Panc1 (cell line): ENCODE measurements at regions of chr12 and their contacts with region 1.

Region 1: GRCh38 chr12:6904280-6905278 is at the start of gene LRRC23:
- DNase-seq: peak; percentile 76
- ATAC-seq: peak; percentile 98
- H3K4me3 ChIP-seq: peak within 1 kb of the TSS; percentile 79 to 89
- H3K27ac ChIP-seq: peak within 1 kb of the TSS; percentile 91
- H3K4me1 ChIP-seq: no peaks in the 10 kb centered on the region; the same call in 1 of the 2 replicates
- H3K27me3 ChIP-seq: no peaks in the 10 kb centered on the region
- CTCF ChIP-seq: no peak
- total RNA-seq, gene LRRC23: 6.5 TPM

Region 2: GRCh38 chr12:6470375-6471163 is 434.0 kb before region 1 on chr12 and contains the start of gene VAMP1:
- CTCF ChIA-PET with region 1: no interaction called
- POLR2A ChIA-PET with region 1: no interaction called
- in situ Hi-C with region 1: no loop called
- intact Hi-C with region 1: no loop called
- DNase-seq: peak; percentile 83
- ATAC-seq: peak; percentile 98
- H3K4me3 ChIP-seq: peak within 1 kb of the TSS; percentile 70 to 78
- H3K27ac ChIP-seq: peak within 1 kb of the TSS; percentile 89
- H3K4me1 ChIP-seq: peaks cover 14% of the 10 kb centered on the region
- H3K27me3 ChIP-seq: no peaks in the 10 kb centered on the region
- CTCF ChIP-seq: no peak
- total RNA-seq, gene VAMP1: 11.2 TPM

Region 3: DNA sequence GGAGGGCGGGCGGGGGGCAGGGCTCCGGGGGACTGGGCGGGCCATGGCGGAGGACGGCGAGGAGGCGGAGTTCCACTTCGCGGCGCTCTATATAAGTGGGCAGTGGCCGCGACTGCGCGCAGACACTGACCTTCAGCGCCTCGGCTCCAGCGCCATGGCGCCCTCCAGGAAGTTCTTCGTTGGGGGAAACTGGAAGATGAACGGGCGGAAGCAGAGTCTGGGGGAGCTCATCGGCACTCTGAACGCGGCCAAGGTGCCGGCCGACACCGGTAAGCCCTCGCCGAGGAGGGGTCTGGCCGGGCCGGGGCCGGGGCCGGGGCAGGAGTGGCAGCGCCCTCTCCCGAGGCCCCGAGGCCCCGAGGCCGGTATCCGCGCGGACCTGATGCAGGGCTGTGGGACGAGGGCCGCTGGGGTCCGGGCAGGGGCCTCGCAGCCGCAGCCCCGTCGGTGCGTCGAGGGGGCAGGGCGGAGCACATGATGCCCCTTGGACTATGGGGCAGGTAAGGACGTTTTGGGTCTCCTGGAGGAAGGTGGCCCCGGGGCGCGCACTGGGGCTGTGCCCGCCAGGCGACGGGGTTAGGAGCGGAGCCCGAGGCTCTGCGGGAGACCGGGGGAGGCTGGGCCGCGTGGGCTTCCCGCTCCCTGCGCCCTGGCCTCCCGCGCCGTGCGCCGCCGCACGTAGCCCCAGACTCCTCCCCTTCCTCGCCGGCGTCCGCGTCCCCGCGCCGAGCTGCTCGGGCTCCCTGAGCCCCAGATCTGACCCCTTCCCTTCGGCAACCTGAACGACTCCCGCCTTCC is 37.0 kb before region 1 on chr12 and contains the start of gene TPI1:
- CTCF ChIA-PET with region 1: no interaction called
- POLR2A ChIA-PET with region 1: interaction called, 11 read pairs
- in situ Hi-C with region 1: no loop called
- intact Hi-C with region 1: no loop called
- DNase-seq: no peak
- ATAC-seq: peak; percentile 78
- H3K4me3 ChIP-seq: peak within 1 kb of the TSS; percentile 61 to 92
- H3K27ac ChIP-seq: peak within 1 kb of the TSS; percentile 82
- H3K4me1 ChIP-seq: peaks cover 28% of the 10 kb centered on the region
- H3K27me3 ChIP-seq: no peaks in the 10 kb centered on the region
- CTCF ChIP-seq: no peak
- total RNA-seq, gene TPI1: 693 TPM